GM10248 (cell line): ENCODE measurements at regions of chr13 and their contacts with region 1.

Region 1: DNA sequence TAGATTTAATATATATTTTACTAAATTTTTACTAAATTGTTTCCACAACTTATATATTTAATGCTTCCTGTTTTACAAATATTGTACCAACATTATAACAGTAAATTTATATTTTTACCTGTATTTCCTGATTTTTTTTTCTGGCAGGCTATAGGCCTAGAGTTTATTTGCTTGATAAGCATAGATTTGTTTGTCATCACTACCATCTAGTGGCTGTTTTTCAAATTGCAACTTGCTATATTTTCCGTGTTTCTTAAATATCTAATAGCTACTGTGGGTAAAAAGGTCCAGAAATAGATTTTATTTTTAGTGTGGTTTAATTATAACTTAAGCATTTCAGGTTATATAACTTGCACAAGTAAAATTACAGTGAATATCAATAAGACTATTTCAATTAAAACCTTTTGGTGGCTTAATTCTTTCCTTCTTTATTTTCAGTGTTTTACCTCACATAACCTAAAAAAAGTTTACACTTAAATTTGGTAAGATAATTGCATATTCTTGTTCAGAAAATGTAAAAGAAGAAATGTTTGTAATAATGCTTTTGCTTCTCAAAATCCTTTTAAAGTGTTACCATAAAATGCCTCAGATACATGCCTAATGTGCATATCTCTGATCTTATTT is 60.6 kb downstream of the NDFIP2 start:
- DNase-seq: peak; percentile 22
- CTCF ChIP-seq: peak; percentile 66

Region 2: GRCh38 chr13:79379274-79379673 is 162.3 kb before region 1 on chr13:
- CTCF ChIA-PET with region 1: no interaction called
- POLR2A ChIA-PET with region 1: no interaction called
- DNase-seq: no peak
- CTCF ChIP-seq: no peak

Region 3: GRCh38 chr13:79405829-79406596 is 135.5 kb before region 1 on chr13 and contains the start of gene RBM26:
- CTCF ChIA-PET with region 1: interaction called, 12 read pairs
- POLR2A ChIA-PET with region 1: no interaction called
- DNase-seq: peak; percentile 94
- CTCF ChIP-seq: no peak

Region 4: GRCh38 chr13:79413521-79413920 is 128.0 kb before region 1 on chr13:
- CTCF ChIA-PET with region 1: interaction called, 29 read pairs
- POLR2A ChIA-PET with region 1: no interaction called
- DNase-seq: no peak
- CTCF ChIP-seq: no peak

Region 5: GRCh38 chr13:79528759-79529191 is 12.8 kb before region 1 on chr13:
- CTCF ChIA-PET with region 1: interaction called, 11 read pairs
- POLR2A ChIA-PET with region 1: no interaction called
- DNase-seq: no peak
- CTCF ChIP-seq: no peak